ENCODE measurements at regions of chr16 and their contacts with region 1.

Region 1: GRCh38 chr16:56425439-56425832 is at the start of gene AMFR:
- DNase-seq: peak; percentile 16 to 94 (median 34)

Region 2: DNA sequence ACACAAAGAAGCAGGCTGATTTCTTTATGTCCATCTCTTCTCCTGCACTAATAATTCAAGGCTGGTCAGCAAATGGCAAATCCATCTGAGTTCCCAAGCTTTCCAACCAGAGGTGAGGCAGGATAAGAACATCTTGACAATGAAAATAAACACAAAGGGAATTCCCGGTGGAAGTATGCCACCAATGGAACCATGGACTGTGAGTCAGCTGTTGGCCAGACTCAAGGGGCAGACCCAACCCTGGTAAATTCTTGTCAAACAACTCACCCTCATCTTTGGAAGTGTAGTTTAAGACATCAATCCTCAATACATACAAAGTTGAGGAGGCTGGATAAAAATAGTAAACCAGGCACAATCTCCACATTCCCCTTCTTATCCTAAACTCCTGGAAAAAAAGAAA is 475.9 kb before region 1 on chr16:
- intact Hi-C with region 1: loop called (anchors 5 kb)
- DNase-seq: no peak

Region 3: GRCh38 chr16:56013962-56014552 is 411.4 kb before region 1 on chr16:
- intact Hi-C with region 1: no loop called
- DNase-seq: peak in 2 of 10 donors; percentile 21 to 37

Region 4: GRCh38 chr16:56294579-56294978 is 130.9 kb before region 1 on chr16:
- intact Hi-C with region 1: no loop called
- DNase-seq: no peak

Measured in posterior cingulate gyrus (tissue), 11 donors.